Activated CD8-positive, alpha-beta T cell treated with anti-CD3 and anti-CD28 coated beads for 36 hours (primary cell): ENCODE measurements at regions of chr7 and their contacts with region 1.

Region 1: DNA sequence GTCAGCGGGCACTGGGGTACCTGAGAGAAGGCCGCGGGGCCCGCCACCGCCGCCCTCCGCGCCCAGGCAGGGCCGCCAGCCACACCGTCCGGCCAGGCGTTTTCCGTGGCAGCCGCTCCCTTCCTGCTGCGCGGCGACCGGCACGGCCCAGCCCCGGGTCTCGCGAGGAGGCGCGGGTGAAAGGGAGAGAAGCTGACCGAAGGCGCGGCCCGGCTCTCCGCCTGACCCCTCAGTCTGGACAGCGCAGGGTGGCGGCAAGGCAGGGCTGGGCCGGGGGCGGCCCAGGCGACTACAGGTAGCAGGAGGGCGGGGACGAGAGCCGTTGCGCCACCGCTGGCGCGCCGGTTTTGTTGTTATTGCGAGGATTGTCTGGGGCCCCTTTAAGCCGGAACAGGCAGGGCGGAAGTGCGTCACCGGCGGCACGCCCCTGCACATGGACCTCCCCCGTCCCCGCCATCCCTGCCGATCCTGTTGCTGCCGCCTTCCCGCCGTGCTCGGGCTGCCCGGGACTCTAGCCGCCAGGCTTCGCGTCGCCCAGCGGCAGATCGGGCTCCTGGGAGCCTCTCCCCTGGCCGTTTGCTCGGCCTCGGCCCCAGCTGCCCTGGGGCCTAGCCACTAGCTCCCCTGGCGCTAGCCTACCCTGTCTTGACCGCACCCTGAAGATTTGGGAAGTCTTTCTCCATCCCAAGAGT is at the start of gene HERPUD2:
- DNase-seq: peak; percentile 95
- ATAC-seq: peak; percentile 83
- H3K4me3 Mint-ChIP-seq: peak within 1 kb of the TSS; percentile 89
- H3K27ac Mint-ChIP-seq: peak within 1 kb of the TSS; percentile 97
- H3K4me1 Mint-ChIP-seq: peaks cover 34% of the 10 kb centered on the region
- H3K27me3 Mint-ChIP-seq: no peaks in the 10 kb centered on the region
- CTCF ChIP-seq: no peak
- total RNA-seq, gene HERPUD2: 24.9 to 25.0 TPM

Region 2: DNA sequence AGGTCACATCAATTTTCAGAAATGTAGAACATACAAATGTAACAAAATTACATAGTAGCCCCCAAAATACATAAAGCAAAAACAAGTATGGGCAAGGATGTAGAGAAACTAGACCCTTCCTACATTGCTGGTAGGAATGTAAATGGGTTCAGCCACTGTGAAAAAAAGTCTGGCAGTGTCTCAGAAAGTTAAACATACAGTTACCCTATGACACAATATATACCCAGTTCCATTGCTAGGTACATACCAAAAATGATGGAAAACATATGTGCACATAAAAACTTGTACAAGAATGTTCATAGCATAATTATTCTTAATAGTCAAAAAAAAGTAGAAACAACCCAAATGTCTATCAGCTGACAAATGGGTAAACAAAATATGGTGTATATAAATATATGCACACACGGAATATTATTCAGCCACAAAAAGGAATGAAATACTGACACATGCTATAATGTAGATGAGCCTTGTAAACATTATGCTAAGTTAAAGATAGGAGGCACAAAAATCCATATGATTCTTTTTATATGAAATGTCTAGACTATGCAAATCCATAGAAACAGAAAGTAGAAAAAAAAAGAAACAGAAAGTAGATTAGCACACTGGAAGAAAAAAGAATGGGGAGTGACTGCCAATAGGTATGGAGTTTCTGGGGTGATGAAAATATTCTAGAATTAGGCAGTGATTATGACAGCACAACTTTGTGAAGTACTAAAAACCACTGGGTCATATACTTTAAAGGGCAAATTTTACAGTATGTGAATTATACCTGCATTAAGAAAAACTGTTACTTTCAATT is 13.5 kb before region 1 on chr7:
- CTCF ChIA-PET with region 1: interaction called, 3 read pairs
- POLR2A ChIA-PET with region 1: interaction called, 11 read pairs
- intact Hi-C with region 1: no loop called
- DNase-seq: no peak
- ATAC-seq: peak; percentile 78
- H3K4me3 Mint-ChIP-seq: peak overlapping the region; percentile 1
- H3K27ac Mint-ChIP-seq: peak overlapping the region; percentile 55
- H3K4me1 Mint-ChIP-seq: peaks cover 65% of the 10 kb centered on the region
- H3K27me3 Mint-ChIP-seq: no peaks in the 10 kb centered on the region
- CTCF ChIP-seq: no peak

Region 3: GRCh38 chr7:35707422-35707821 is 12.5 kb after region 1 on chr7:
- CTCF ChIA-PET with region 1: interaction called, 41 read pairs
- POLR2A ChIA-PET with region 1: interaction called, 14 read pairs
- intact Hi-C with region 1: no loop called
- DNase-seq: no peak
- ATAC-seq: no peak
- H3K4me3 Mint-ChIP-seq: no peak overlapping the region
- H3K27ac Mint-ChIP-seq: no peak overlapping the region
- H3K4me1 Mint-ChIP-seq: peaks cover 14% of the 10 kb centered on the region
- H3K27me3 Mint-ChIP-seq: no peaks in the 10 kb centered on the region
- CTCF ChIP-seq: no peak

Region 4: DNA sequence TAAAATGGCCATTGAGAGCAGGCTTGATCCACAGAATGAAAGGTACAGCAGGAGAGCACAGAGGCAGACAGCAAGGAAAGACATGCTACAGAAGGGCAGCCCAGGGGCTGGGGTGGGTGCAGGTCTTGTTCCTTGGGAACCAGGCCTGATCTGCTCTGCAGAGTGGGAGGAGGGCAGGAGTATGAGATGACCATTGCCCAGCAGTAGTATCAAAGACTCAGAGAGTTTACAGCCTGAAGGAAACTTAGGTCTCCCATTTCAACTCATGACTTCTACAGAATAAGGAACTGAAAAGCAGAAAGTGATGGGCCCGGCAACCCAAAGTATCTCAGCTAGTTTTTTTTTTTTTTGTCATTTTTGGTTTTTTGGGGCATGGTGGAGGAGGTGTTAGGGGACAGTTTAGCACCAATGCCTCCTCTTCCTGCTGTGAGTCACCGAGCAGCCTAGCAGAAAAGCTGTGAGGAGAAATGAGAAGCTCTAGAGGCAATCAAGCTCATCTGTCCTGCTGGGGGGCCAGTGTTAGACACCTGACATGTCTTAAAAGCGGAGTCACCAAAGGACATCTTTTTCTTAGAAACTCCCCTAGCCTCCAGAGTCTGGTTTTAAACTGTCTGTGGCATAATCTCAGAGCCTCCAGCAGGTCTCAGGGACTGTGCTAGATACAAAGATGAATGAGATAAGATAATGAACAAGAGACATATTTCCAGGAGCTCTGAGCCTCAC is 34.3 kb after region 1 on chr7:
- CTCF ChIA-PET with region 1: interaction called, 49 read pairs
- POLR2A ChIA-PET with region 1: interaction called, 11 read pairs
- intact Hi-C with region 1: loop called (anchors 5 kb)
- DNase-seq: peak; percentile 82
- ATAC-seq: peak; percentile 80
- H3K4me3 Mint-ChIP-seq: no peak overlapping the region
- H3K27ac Mint-ChIP-seq: peak overlapping the region; percentile 70
- H3K4me1 Mint-ChIP-seq: peaks cover 66% of the 10 kb centered on the region
- H3K27me3 Mint-ChIP-seq: no peaks in the 10 kb centered on the region
- CTCF ChIP-seq: no peak

Region 5: GRCh38 chr7:35906191-35906908 is 211.4 kb after region 1 on chr7:
- CTCF ChIA-PET with region 1: interaction called, 11 read pairs
- POLR2A ChIA-PET with region 1: interaction called, 3 read pairs
- intact Hi-C with region 1: no loop called
- DNase-seq: peak; percentile 75
- ATAC-seq: peak; percentile 87
- H3K4me3 Mint-ChIP-seq: no peak overlapping the region
- H3K27ac Mint-ChIP-seq: peak overlapping the region; percentile 49
- H3K4me1 Mint-ChIP-seq: peaks cover 9% of the 10 kb centered on the region
- H3K27me3 Mint-ChIP-seq: no peaks in the 10 kb centered on the region
- CTCF ChIP-seq: peak; percentile 92